ENCODE measurements at regions of chr20 and their contacts with region 1.

Region 1: DNA sequence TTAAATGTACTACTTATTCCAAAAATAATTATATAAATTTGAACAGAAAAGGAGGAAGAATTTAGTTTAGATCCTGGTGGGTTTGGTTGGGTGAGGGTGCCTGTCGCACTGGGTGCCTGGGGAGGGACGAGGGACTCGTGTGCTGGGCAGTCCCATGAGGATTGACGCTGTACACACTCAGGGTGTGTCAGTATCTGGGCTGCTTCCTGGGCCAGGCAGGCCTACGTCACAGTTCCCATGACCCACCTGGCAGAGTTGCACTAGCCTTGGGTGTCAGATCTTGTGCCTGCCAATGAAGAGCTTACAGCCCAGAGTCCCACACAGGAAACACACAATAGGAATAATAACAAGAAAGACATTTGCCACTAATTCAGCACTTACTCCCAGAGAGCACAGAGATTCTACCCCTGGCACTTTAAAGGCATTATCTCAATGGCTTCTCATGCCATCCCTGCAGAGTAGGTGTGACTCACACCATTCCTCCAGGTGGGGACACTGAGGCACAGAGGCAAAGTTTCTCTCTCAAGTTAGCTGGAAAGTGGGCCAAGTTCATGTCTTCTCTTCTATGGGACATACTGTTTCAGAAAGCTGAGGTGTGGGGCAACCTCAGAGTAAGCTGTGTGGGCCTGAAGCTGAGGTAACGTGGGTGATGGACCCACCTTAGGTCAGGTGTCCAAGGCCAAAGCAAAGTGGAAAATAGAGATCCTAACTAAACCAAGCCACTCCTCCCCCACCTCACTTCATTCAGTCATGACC is 1.3 kb upstream of the SDCBP2 start:
- DNase-seq: peak; percentile 86 to 93
- H3K4me3 ChIP-seq: no peak overlapping the region
- CTCF ChIP-seq: no peak
- POLR2A ChIP-seq: no peak

Region 2: DNA sequence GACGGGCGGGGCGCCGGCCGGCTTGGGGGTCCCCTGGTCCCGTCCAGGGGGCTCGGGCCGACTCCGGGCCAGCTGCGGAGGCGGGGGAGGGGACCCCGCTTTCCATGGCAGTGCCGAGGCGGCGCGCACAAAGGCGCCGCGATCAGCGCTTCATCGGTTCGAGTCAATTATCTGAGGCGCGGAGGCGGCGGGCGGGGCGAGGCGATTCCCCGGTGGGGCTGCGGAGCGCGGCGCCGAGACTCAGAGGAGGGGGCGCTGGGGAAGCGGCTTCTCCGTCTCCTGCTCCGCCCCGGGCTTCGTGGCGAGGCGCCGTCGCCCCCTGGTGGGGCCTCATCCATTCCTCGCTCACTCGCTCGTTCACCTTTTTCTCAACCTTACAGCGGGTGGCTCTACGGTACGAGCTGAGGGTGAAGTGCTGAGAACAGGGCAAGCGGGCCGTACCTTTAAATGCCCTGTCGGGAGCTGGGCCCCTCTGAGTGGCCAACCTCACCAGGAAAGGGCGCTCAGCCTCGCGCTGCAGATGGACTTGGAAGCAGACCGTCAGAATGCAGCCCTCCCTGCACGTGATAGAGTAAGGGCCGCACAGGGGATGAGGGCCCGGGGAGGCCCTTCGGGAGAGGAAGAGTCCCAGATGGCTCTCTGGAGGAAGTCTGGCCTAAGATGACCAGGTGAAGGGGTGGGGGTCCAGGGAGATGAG is 601.9 kb before region 1 on chr20:
- intact Hi-C with region 1: no loop called
- DNase-seq: no peak
- H3K4me3 ChIP-seq: no peak overlapping the region
- CTCF ChIP-seq: no peak
- POLR2A ChIP-seq: no peak

Region 3: GRCh38 chr20:1392823-1393506 is 62.7 kb after region 1 on chr20 and contains the start of gene FKBP1A:
- intact Hi-C with region 1: loop called (anchors 10 kb)
- DNase-seq: peak; percentile 82 to 97
- H3K4me3 ChIP-seq: peak within 1 kb of the TSS; percentile 98
- CTCF ChIP-seq: no peak
- POLR2A ChIP-seq: peak in 1 of 2 donors; percentile 37
- total RNA-seq, gene FKBP1A: 72.6 to 133 (median 87.5) TPM